GM12878 (cell line): ENCODE measurements at regions of chr5 and their contacts with region 1.

Region 1: DNA sequence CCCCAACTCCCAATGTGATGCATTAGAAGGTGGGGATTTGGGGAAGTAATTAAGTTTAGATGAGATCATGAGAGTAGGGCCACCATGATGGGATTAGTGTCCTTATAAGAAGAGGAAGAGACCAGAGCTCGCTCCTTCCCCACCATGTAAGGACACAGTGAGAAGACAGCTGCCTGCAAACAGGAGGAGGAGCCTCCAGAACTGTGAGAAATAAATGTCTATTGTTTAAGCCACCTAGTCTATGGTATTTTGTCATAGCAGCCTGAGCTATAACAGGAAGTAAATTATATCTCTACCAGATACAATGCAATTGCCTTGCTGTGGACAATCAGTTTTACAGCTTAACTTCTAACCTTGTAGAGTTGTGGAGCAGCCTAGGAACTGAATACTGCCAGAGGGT is 58.0 kb downstream of the ANKRD33B start:
- DNase-seq: no peak
- ATAC-seq: peak; percentile 17; the same call in 2 of the 3 replicates
- H3K4me3 ChIP-seq: no peak overlapping the region
- H3K27ac ChIP-seq: peak overlapping the region; percentile 47
- H3K4me1 ChIP-seq: peaks cover 27% of the 10 kb centered on the region
- H3K27me3 ChIP-seq: no peaks in the 10 kb centered on the region
- CTCF ChIP-seq: no peak
- EP300 ChIP-seq: no peak
- POLR2A ChIP-seq: no peak
- RAD21 ChIP-seq: no peak

Region 2: GRCh38 chr5:10590226-10590999 is 31.4 kb before region 1 on chr5:
- CTCF ChIA-PET with region 1: interaction called, 22 read pairs
- POLR2A ChIA-PET with region 1: interaction called, 5 read pairs
- RAD21 ChIA-PET with region 1: interaction called, 19 read pairs
- SMC1A ChIA-PET with region 1: interaction called, 16 read pairs
- in situ Hi-C with region 1: no loop called
- intact Hi-C with region 1: no loop called
- DNase-seq: no peak
- ATAC-seq: peak; percentile 27; the same call in 2 of the 3 replicates
- H3K4me3 ChIP-seq: no peak overlapping the region
- H3K27ac ChIP-seq: peak overlapping the region; percentile 28
- H3K4me1 ChIP-seq: peaks cover 79% of the 10 kb centered on the region
- H3K27me3 ChIP-seq: no peaks in the 10 kb centered on the region
- CTCF ChIP-seq: no peak
- EP300 ChIP-seq: no peak
- POLR2A ChIP-seq: no peak
- RAD21 ChIP-seq: no peak